ENCODE measurements at regions of chr1 and their contacts with region 1.

Region 1: DNA sequence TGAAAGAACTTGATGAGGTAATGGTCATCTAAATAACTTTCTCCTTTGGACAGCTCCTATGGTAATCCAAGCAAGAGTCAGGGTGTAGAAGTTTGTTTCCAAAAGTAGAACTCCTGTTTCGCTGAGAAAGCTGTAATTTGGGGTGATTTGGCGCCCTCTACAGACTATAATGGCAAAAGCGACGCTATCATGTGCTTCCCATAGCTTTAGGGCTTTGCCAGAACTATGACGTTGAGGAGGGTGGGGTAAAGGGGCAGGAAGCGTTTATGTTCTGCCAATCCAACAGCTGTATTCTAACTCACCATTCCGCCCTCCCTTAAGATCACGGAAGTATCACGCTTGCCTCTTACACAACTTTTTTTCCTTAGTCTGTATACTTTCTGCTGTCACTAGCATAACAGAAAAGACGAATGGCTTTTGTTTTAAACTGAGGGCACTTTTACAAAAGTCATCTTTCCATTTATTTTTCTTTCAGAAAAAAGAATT is at the start of gene FMO4:
- DNase-seq: peak; percentile 99
- H3K4me3 ChIP-seq: peak within 1 kb of the TSS in 6 of 7 experiments; percentile 40 to 78 (median 56)
- H3K27ac ChIP-seq: peak within 1 kb of the TSS; percentile 69 to 84
- H3K4me1 ChIP-seq: peaks cover 0 to 10% (median 5%) of the 10 kb centered on the region in 4 experiments
- H3K27me3 ChIP-seq: no peaks in the 10 kb centered on the region

Region 2: DNA sequence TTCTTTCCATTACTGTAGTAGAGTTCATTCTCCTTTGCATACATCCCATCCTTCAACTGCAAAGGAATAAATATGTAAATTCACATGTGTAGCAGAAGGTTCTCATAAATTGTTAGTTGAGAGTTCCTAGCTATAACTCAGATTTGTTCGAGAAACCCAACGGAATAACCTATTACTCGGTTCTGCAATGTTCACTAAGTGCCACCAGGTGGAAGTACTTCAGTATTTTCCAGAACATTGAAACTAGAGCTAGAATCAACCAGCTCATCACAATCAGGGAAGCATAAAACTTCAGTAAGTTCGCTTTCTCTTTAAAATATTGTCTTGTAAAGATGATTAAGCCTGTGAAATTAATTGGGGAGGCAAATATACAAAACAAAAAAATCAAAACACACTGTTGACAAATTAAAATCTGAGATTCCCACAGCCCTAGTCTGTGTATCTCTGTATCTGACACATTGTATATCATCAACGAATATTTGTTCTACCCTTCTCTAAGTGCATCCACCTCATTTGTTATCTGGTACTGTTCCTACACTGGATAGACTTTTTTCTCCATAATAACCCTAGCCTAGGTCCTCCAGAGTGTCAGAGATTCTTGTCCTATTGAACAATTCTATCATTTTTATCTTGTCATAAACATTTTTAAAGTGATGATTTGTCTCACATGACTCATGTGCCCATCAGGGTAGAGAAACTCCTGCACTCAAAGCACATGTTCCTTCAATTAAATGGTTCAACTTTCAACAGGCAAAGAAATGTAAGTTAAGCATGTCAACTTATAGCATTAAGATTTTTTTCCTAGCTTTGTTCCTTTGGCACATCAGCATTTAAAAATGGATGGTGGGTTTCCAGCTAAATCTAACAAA is 346.6 kb before region 1 on chr1:
- CTCF ChIA-PET with region 1: interaction called, 18 read pairs
- POLR2A ChIA-PET with region 1: no interaction called
- DNase-seq: peak; percentile 17 to 46 (median 42)
- H3K4me3 ChIP-seq: no peak overlapping the region
- H3K27ac ChIP-seq: no peak overlapping the region
- H3K4me1 ChIP-seq: no peaks in the 10 kb centered on the region
- H3K27me3 ChIP-seq: peaks cover 0 to 5% (median 0%) of the 10 kb centered on the region in 5 experiments

Region 3: GRCh38 chr1:171075041-171075440 is 238.8 kb before region 1 on chr1:
- CTCF ChIA-PET with region 1: no interaction called
- POLR2A ChIA-PET with region 1: no interaction called
- DNase-seq: no peak
- H3K4me3 ChIP-seq: no peak overlapping the region
- H3K27ac ChIP-seq: no peak overlapping the region
- H3K4me1 ChIP-seq: no peaks in the 10 kb centered on the region
- H3K27me3 ChIP-seq: peaks cover 0 to 1% (median 0%) of the 10 kb centered on the region in 5 experiments

Region 4: DNA sequence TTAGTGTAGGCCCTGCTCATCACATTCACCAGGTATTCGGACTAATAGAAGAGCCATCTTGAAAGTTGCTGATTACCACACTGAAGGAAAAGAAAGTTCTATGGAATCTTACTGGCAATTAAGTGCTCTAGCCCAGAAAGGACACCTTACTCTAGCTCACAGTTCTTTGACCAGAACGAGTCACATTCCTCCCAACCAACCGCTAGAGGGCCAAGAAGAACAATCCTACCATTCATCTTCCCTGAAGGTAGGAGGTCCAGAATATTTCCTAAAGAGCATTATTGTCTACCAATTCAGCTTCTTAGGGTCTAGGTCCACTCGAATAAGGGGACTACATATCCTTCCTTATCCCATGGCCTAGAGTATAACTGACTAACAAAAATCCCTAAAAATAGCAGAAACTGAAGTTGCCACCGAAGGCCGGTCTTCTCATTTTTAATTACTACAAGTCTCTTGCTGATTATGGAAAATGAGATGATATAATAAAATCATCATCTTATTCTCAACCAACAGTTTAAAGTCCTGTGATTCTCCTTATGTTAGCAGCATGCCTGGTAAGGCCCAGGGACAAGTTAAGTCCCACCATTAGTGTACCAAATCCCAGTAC is 68.3 kb before region 1 on chr1:
- CTCF ChIA-PET with region 1: interaction called, 38 read pairs
- POLR2A ChIA-PET with region 1: no interaction called
- DNase-seq: peak; percentile 19 to 51 (median 41)
- H3K4me3 ChIP-seq: no peak overlapping the region
- H3K27ac ChIP-seq: no peak overlapping the region
- H3K4me1 ChIP-seq: no peaks in the 10 kb centered on the region
- H3K27me3 ChIP-seq: peaks cover 3 to 22% (median 7%) of the 10 kb centered on the region in 5 experiments

Region 5: DNA sequence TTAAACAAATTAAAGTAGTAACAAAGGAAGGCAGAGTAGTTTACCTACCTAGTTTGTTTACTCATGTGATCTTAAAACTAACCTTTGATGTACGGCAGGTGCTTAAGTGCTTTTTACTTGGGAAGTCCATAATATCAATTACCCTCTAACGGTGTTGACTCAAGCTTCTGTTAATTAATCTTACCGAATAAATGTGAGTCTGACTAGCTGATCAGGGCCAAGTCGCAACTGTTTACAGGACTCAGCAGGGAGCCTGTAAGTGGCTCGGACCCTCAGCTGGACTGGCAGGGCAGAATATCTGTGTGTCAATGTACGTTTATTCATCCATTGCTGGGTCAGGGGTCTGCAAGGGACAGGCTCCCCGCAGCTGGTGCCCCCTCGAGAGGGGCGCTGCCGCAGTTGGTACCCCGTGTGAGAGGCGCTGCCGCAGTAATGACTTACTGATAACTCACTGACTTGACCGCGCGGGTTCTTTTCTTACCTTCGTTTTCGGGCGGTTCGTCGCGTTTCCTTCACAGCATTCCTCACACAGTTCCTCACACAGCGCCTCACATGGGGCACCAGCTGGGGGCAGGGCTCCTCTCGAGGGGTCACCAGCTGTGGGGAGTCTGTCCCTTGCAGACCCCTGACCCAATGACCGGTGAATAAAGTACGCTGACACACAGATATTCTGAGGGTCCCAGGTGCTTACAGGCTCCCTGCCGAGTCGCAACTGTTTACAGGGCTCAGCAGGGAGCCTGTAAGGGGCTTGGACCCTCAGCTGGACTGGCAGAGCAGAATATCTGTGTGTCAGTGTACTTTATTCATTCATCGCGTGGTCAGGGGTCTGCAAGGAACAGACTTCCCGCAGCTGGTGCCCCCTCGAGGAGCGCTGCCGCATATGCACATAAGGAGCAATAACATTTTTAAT is 62.6 kb before region 1 on chr1:
- CTCF ChIA-PET with region 1: interaction called, 38 read pairs
- POLR2A ChIA-PET with region 1: no interaction called
- DNase-seq: peak; percentile 40 to 74 (median 61)
- H3K4me3 ChIP-seq: peak overlapping the region; percentile 11 to 82 (median 71)
- H3K27ac ChIP-seq: no peak overlapping the region
- H3K4me1 ChIP-seq: peaks cover 0 to 11% (median 6%) of the 10 kb centered on the region in 4 experiments
- H3K27me3 ChIP-seq: peaks cover 3 to 26% (median 14%) of the 10 kb centered on the region in 5 experiments

Region 6: GRCh38 chr1:171372456-171373084 is 58.7 kb after region 1 on chr1:
- CTCF ChIA-PET with region 1: no interaction called
- POLR2A ChIA-PET with region 1: no interaction called
- DNase-seq: no peak
- H3K4me3 ChIP-seq: no peak overlapping the region
- H3K27ac ChIP-seq: no peak overlapping the region
- H3K4me1 ChIP-seq: no peaks in the 10 kb centered on the region
- H3K27me3 ChIP-seq: no peaks in the 10 kb centered on the region

Region 7: DNA sequence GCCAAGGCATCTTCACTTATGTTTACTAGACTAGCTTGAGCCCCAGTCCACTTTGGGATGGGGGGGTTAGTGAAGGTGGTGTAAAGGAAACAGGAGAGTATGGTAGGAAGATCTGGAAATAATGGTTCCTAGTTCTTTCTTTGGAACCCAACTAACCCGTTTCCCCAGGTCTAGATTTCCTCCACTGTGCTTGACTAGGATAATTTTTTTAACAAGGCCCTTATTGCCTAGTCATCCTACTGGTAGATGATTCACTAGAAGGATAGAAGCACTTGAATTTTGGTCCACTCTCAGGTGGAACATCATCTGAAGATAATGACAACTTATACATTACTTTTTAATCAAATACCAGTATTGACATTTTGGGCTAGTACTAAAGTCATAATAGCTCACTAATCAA is 262.3 kb after region 1 on chr1:
- CTCF ChIA-PET with region 1: no interaction called
- POLR2A ChIA-PET with region 1: no interaction called
- DNase-seq: no peak
- H3K4me3 ChIP-seq: no peak overlapping the region
- H3K27ac ChIP-seq: no peak overlapping the region
- H3K4me1 ChIP-seq: no peaks in the 10 kb centered on the region
- H3K27me3 ChIP-seq: no peaks in the 10 kb centered on the region

Measured in common myeloid progenitor, CD34-positive (primary cell).